GM13976 (cell line): ENCODE measurements at regions of chr3 and their contacts with region 1.

Region 1: GRCh38 chr3:44913868-44914468 is 39.6 kb downstream of the TGM4 start:
- DNase-seq: peak; percentile 81
- CTCF ChIP-seq: peak; percentile 69

Region 2: GRCh38 chr3:44323341-44323955 is 590.5 kb before region 1 on chr3:
- in situ Hi-C with region 1: loop called (anchors 25 kb)
- DNase-seq: peak; percentile 31
- CTCF ChIP-seq: peak; percentile 72

Region 3: DNA sequence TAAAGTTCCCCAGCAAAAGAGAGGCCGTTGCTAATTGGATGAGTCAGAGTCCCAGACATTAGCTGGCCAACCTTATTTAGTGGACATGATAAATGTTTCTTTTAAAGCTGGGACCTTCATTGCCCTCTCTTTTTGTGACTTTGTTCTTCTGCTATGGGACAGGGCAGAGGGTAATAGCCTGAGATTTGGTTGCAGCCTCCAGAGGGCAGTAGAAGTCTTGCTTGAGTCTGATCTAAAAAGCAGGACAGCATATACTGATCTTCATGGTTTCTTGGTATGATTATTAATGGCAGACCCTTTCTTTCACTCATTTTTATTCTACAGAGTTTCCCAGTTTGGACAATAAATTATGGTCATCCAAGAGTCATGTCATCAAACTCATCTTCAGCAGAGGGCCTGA is 384.0 kb before region 1 on chr3:
- in situ Hi-C with region 1: loop called (anchors 10 kb)
- DNase-seq: peak; percentile 42
- CTCF ChIP-seq: peak; percentile 31

Region 4: DNA sequence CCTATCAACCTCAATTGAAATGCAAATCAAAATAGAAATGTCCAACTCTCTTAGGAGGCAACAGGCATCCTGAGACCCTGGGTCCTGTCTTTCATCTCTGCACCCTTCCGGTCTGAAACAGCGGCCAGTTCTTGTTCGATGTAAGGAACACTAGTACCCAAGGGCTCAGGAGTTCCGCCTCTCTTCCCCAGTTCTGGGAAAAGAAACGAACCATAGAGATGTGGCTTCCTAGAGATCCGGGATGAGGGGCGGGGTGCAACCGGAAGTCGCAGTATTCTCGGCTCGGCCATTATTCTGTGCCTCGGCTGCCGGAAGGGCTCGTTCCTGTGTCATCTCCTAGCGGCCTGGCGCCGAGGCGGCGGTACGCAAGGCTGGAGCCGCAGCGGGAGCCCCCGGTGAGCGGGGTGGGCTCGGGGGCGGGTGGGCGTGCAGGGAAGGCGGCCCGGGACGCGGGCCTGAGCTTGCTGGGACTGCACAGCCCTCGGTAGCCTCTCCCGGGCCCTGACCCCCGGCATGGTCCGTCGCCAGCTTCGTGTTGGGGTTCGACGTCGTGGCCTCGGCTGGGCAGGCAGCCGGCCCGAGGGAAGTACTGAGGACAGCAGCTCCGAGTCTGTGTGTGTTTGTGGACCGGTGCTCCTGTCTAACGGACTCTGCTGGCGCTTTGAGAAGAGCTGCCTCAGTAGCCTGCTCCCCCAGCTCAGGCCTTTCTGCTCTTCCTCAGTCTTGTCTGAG is 289.1 kb before region 1 on chr3 and contains the start of gene ZNF197:
- in situ Hi-C with region 1: no loop called
- DNase-seq: peak; percentile 79
- CTCF ChIP-seq: no peak

Region 5: DNA sequence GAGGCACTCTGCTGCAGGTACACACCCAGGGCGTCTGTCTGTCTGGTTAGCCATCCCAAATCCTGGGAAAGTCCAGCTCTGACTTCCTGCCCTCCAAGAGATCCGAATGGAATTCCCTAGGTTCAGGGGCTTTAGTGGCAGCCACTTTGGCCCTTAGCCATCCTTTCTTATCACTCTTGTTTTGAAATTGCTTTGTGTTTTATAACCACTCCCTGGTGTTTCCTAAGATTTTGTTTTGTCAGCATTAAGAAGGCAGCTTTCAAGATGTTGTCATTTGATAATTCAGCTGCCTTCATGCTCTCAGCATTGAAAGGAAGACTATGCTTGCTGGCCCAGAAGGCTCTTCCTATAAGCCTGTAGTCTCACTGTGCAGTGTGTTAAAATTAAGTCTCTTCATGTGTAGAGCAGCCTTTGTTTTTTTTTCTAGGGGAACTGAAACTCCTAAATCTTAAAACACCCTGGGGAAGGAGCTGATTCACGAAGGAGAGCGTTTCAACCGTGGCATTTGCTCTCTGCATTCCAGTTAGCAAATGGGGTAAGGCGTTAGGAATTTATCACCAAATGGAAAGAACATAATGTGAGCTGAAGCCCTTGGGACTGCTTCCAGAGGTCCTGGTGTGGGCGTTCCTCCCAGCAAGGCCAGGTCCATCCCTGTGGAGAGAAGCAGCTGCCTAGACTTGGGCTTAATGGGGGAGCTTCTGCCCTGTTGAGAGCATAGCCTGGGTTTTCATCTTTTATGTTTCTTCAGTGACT is 98.0 kb after region 1 on chr3:
- in situ Hi-C with region 1: no loop called
- DNase-seq: peak; percentile 50
- CTCF ChIP-seq: no peak

Region 6: DNA sequence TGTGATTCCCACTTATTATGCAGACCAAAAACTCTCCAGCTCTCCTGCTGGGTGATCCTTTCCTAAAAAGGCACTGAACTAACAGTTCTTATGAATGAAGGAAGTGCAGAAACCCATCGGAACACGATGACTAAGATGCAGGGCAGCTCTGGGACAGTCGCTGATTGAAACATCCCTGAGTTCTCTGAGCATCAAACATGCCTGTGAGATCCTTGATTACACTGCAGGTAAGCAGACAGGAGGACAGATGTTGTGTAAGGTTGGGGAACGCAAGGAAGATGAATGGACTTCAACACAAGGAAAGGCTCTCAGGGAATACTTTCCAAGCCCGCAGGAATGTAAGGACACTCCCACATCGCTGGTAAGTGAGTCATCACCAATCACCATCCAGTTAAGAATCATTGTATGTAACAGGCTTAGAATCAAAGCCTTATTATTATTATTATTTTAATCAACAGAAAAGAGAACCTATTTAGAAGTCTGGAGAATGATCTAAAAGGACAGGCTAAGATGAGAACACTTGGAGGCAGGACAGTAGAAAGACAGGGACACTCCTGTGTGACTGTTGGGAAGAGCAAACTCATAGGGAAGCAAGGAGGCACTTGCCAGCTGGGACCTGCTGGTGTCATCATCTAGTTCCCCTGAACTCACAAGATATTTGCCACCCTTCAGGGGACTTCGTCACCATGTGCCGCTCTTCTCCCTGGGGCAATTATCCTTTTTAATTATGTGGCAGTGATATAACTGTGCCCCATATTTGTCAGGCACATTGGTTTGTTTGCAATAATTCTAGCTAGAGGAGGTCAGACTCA is 286.1 kb after region 1 on chr3:
- in situ Hi-C with region 1: no loop called
- DNase-seq: no peak
- CTCF ChIP-seq: no peak